Activated CD4-positive, alpha-beta T cell treated with anti-CD3 and anti-CD28 coated beads for 36 hours (primary cell): ENCODE measurements at regions of chr2 and their contacts with region 1.

Region 1: DNA sequence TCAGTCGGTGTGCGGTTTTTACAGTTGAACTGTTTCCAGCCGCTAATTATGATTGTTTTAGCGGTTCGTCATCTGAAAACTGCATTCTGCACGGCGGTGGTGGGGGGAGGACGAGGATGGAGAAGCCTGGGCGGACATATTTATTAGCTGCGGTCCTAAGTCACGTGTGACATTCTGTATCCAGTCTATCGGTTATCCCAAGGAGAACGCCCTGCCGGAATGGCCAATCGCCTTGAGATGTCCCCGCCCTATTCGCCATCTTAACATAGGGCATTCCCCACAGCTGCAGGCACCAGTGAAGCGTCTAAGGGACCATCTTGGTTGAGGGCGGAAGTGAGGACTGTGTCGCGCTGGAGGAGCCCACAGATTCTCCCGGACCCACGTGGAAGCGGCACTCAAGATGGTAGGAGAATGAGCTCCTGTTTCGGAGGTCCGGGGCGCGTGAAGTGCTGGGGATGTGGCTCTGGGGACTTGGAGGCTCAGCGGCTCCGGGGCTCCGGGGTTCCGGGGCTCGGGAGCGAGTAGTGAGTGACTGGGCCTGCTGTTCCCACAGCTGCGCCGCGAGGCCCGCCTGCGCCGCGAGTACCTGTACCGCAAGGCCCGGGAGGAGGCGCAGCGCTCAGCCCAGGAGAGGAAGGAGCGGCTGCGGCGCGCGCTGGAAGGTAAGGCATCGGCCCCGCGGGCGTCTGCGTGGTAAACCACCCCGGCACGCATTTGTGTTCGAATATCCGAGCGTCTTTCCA is at the start of gene IMP4:
- DNase-seq: peak; percentile 96
- ATAC-seq: peak; percentile 92
- H3K4me3 Mint-ChIP-seq: peak within 1 kb of the TSS; percentile 98
- H3K27ac Mint-ChIP-seq: peak within 1 kb of the TSS; percentile 100
- H3K4me1 Mint-ChIP-seq: peaks cover 28% of the 10 kb centered on the region
- H3K27me3 Mint-ChIP-seq: no peaks in the 10 kb centered on the region
- total RNA-seq, gene IMP4: 148 to 169 TPM

Region 2: GRCh38 chr2:129877289-129877779 is 465.4 kb before region 1 on chr2:
- CTCF ChIA-PET with region 1: no interaction called
- POLR2A ChIA-PET with region 1: no interaction called
- intact Hi-C with region 1: loop called in 1 of 2 experiments (anchors 2 kb)
- DNase-seq: peak; percentile 90
- ATAC-seq: peak; percentile 95
- H3K4me3 Mint-ChIP-seq: peak overlapping the region; percentile 87
- H3K27ac Mint-ChIP-seq: peak overlapping the region; percentile 87
- H3K4me1 Mint-ChIP-seq: peaks cover 11% of the 10 kb centered on the region
- H3K27me3 Mint-ChIP-seq: no peaks in the 10 kb centered on the region

Region 3: GRCh38 chr2:130332271-130333073 is 10.2 kb before region 1 on chr2:
- CTCF ChIA-PET with region 1: interaction called, 40 read pairs
- POLR2A ChIA-PET with region 1: interaction called, 5 read pairs
- intact Hi-C with region 1: no loop called
- DNase-seq: peak; percentile 84
- ATAC-seq: peak; percentile 82
- H3K4me3 Mint-ChIP-seq: peak overlapping the region; percentile 26
- H3K27ac Mint-ChIP-seq: no peak overlapping the region
- H3K4me1 Mint-ChIP-seq: peaks cover 14% of the 10 kb centered on the region
- H3K27me3 Mint-ChIP-seq: peaks cover 25% of the 10 kb centered on the region

Region 4: DNA sequence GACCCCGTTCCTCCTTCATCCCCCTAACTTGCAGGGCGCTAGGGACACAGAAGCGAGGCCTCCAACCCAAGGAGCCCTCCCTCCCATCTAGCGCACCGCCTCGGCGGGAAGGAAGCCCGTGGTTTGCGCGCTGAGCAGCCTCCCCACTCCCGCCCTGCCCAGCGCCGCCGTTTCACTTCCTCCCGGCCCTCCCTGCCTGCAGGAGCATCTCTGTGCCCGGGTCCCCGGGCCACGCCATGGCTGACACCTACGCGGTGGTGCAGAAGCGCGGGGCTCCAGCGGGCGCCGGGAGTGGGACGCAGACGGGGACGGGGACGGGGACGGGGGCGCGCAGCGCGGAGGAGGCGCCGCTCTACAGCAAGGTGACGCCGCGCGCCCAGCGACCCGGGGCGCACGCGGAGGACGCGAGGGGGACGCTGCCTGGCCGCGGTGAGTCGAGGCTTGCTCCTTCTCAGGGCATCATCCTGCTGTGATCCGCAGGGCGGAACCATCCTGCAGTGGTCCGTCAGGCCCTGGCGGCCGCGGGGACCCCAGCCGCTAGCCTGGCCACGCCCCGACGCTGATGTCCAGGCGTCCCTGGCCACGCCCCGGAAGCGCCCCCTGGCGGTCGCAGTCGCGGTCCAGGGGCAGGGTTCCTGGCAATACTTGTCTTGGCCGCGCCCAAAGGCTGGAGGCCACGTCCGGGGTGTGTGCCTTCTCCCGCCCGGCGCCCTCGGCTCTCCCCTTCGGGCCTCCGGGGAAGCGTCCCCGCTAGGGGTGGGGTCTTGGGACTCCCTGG is 29.5 kb after region 1 on chr2:
- CTCF ChIA-PET with region 1: interaction called, 6 read pairs
- POLR2A ChIA-PET with region 1: interaction called, 3 read pairs
- intact Hi-C with region 1: loop called (anchors 1 kb)
- DNase-seq: peak; percentile 85
- ATAC-seq: peak; percentile 68
- H3K4me3 Mint-ChIP-seq: peak overlapping the region; percentile 84
- H3K27ac Mint-ChIP-seq: peak overlapping the region; percentile 96
- H3K4me1 Mint-ChIP-seq: peaks cover 60% of the 10 kb centered on the region
- H3K27me3 Mint-ChIP-seq: no peaks in the 10 kb centered on the region

Region 5: GRCh38 chr2:130727286-130728018 is 384.7 kb after region 1 on chr2:
- CTCF ChIA-PET with region 1: interaction called, 4 read pairs
- POLR2A ChIA-PET with region 1: no interaction called
- intact Hi-C with region 1: loop called in 1 of 2 experiments (anchors 5 kb)
- DNase-seq: peak; percentile 93
- ATAC-seq: peak; percentile 97
- H3K4me3 Mint-ChIP-seq: peak overlapping the region; percentile 67
- H3K27ac Mint-ChIP-seq: peak overlapping the region; percentile 55
- H3K4me1 Mint-ChIP-seq: peaks cover 3% of the 10 kb centered on the region
- H3K27me3 Mint-ChIP-seq: peaks cover 8% of the 10 kb centered on the region

Region 6: GRCh38 chr2:131093006-131093695 is 750.4 kb after region 1 on chr2 and contains the start of gene FAM168B:
- CTCF ChIA-PET with region 1: no interaction called
- POLR2A ChIA-PET with region 1: no interaction called
- intact Hi-C with region 1: loop called in 1 of 2 experiments (anchors 1 kb)
- DNase-seq: peak; percentile 93
- ATAC-seq: peak; percentile 85
- H3K4me3 Mint-ChIP-seq: peak within 1 kb of the TSS; percentile 81
- H3K27ac Mint-ChIP-seq: peak within 1 kb of the TSS; percentile 97
- H3K4me1 Mint-ChIP-seq: peaks cover 26% of the 10 kb centered on the region
- H3K27me3 Mint-ChIP-seq: no peaks in the 10 kb centered on the region
- total RNA-seq, gene FAM168B: 59.8 to 74.7 TPM